Mammary epithelial cell (primary cell): ENCODE measurements at regions of chr1 and their contacts with region 1.

Region 1: GRCh38 chr1:64038965-64039926 is 164.2 kb upstream of the UBE2U start:
- DNase-seq: peak; percentile 100
- H3K4me3 ChIP-seq: no peak overlapping the region
- H3K27ac ChIP-seq: peak overlapping the region; percentile 78
- H3K4me1 ChIP-seq: peaks cover 57% of the 10 kb centered on the region
- H3K27me3 ChIP-seq: no peaks in the 10 kb centered on the region
- CTCF ChIP-seq: no peak

Region 2: GRCh38 chr1:63828322-63829044 is 210.8 kb before region 1 on chr1:
- CTCF ChIA-PET with region 1: no interaction called
- dilution Hi-C with region 1: no loop called
- in situ Hi-C with region 1: no loop called
- intact Hi-C with region 1: no loop called
- DNase-seq: no peak
- H3K4me3 ChIP-seq: no peak overlapping the region
- H3K27ac ChIP-seq: no peak overlapping the region
- H3K4me1 ChIP-seq: peaks cover 12% of the 10 kb centered on the region
- H3K27me3 ChIP-seq: no peaks in the 10 kb centered on the region
- CTCF ChIP-seq: no peak

Region 3: DNA sequence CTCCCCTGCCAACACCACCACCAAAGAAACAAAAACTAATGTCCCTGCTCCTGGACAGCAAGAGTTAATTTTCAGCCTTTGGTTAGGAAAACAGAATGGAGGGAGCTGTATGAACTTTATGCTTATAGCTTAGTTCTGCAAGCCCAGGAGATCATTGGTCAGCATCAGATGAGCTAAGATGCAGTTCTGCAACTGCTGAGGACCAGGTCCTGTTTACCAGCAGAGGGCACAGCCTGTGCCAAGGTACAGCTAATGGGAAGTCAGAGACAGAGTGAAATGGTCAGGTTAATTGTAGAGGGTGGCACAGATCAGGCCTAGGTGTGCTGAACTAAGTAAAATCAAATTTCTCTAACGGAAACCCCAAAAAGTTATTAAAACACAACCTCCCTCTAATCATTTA is 104.1 kb before region 1 on chr1:
- CTCF ChIA-PET with region 1: no interaction called
- dilution Hi-C with region 1: no loop called
- in situ Hi-C with region 1: no loop called
- intact Hi-C with region 1: loop called (anchors 5 kb)
- DNase-seq: peak; percentile 40
- H3K4me3 ChIP-seq: no peak overlapping the region
- H3K27ac ChIP-seq: no peak overlapping the region
- H3K4me1 ChIP-seq: no peaks in the 10 kb centered on the region
- H3K27me3 ChIP-seq: no peaks in the 10 kb centered on the region
- CTCF ChIP-seq: peak; percentile 36 to 81

Region 4: DNA sequence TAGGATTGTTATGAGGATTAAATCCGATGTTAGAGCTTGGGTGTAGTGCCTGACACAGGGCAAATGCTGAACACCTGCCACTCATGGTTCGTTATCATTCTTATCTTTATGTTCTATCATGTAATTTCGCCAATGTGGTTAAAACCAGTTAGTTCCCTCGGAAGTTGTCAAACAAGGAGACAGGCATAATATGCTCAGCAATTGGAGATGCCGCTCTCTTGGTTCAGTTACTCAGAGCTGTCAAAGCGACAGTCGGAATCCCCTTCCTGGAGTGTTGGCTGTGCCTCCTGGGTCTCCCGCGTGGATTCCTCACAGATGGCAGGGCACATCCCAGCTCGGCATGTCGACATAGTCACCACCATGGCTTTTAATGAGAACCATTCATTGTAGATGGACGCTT is 73.2 kb before region 1 on chr1:
- CTCF ChIA-PET with region 1: no interaction called
- dilution Hi-C with region 1: no loop called
- in situ Hi-C with region 1: no loop called
- intact Hi-C with region 1: no loop called
- DNase-seq: no peak
- H3K4me3 ChIP-seq: no peak overlapping the region
- H3K27ac ChIP-seq: no peak overlapping the region
- H3K4me1 ChIP-seq: peaks cover 16% of the 10 kb centered on the region
- H3K27me3 ChIP-seq: no peaks in the 10 kb centered on the region
- CTCF ChIP-seq: no peak

Region 5: DNA sequence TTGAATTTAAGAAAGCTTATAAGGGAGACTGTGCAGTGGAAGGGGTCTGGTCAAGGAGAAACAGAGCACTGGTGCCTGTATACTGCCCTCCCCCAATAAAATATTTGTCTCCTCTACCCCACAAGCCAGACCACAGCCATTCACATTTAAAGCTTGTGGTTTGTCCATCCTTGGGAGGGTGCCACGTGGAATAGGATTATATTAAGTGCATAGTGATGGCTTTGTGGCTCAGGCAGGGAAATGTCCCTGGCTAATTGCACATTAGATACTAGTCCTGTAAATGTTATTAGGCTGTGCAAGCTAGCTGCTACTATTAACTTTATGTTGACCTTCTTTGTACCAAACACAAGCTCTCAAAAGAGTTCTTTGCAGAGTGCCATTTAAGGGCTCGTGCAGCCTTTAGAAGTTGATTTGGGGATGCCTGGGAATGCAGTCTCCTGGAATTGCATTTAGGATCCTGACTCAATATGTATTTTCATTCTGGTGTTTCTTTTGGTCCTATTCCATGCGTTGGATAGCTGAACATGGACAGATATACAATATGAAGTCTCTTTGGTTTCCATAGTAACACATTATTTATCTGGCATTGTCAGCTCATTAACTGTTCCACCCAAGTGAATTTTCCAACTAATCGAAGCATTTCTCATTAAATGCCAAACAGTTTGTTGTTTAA is 54.9 kb before region 1 on chr1:
- CTCF ChIA-PET with region 1: no interaction called
- dilution Hi-C with region 1: no loop called
- in situ Hi-C with region 1: no loop called
- intact Hi-C with region 1: loop called (anchors 5 kb)
- DNase-seq: peak; percentile 71
- H3K4me3 ChIP-seq: peak overlapping the region in 2 of 3 experiments; percentile 0 to 4
- H3K27ac ChIP-seq: peak overlapping the region; percentile 96
- H3K4me1 ChIP-seq: peaks cover 59% of the 10 kb centered on the region
- H3K27me3 ChIP-seq: no peaks in the 10 kb centered on the region
- CTCF ChIP-seq: no peak

Region 6: DNA sequence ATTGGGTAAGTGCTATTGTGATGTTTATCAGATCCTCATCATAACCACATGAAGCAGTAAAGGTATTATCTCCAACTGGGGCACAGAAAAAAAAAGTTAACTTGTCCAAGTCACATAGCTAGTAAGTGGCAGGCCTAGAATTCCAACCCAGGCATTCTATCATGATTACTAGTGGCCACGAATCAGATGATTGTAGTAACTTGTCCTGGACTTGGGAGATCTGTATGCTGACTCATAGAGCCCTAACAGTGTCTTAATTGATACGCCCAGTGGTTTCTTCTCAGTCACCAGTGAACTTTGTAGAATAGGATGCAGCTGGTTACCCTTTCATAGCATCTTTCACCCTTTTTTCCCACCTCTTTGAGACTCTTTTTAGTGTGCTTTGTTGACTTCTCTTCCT is 73.0 kb after region 1 on chr1:
- CTCF ChIA-PET with region 1: no interaction called
- dilution Hi-C with region 1: no loop called
- in situ Hi-C with region 1: no loop called
- intact Hi-C with region 1: loop called (anchors 5 kb)
- DNase-seq: peak; percentile 98
- H3K4me3 ChIP-seq: no peak overlapping the region
- H3K27ac ChIP-seq: peak overlapping the region; percentile 93
- H3K4me1 ChIP-seq: peaks cover 39% of the 10 kb centered on the region
- H3K27me3 ChIP-seq: no peaks in the 10 kb centered on the region
- CTCF ChIP-seq: no peak